Endothelial cell of umbilical vein (primary cell): ENCODE measurements at regions of chr19 and their contacts with region 1.

Region 1: DNA sequence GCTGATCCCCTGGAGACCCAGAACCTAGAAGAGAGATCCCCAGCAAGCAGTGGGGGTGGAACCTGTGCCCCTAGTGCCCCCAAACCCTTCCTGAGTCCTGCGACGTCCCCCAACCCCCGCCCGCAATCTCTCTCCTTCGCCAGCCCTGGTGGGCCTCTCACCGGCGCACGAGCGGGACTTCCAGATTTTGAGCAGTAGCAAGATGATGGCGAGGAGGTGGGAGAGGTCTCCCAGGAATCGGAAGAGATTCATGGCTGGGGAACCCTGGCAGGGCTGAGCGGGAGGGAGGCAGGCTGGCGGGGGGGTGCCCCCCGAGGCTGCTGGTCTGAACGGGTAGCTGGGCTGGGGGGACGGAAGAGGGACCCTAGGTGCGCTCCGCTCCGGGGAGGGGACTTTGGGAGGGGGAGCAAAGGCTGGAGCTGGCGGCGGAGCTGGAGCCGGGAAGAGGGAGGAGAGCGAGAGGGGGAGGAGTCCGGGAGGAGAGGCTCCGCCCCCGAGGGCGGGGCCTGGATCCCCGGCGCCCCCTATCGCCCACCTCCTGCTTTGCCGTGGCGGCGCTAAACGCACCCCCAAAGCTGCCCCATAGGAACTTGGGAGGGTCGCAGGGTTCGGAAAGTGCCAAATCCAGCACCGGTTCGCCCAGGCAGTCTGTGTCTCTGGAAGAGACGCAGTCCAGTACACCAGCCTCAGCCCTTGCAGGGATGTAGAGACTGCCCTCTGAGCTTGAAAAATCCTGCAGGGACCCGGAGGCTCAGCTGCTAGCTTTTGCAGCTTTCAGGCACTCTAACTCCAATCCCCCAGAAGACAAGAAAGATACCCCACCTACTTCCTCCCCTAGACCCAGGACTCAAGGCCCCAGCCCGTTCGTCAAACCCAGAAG is at the start of gene KDELR1:
- DNase-seq: peak; percentile 75
- H3K4me3 ChIP-seq: peak within 1 kb of the TSS; percentile 76 to 99 (median 83)
- H3K27ac ChIP-seq: peak within 1 kb of the TSS; percentile 65
- H3K4me1 ChIP-seq: peaks cover 3% of the 10 kb centered on the region
- H3K27me3 ChIP-seq: peaks cover 16 to 33% of the 10 kb centered on the region in 2 experiments
- CTCF ChIP-seq: peak; percentile 94 to 99
- POLR2A ChIP-seq: peak; percentile 77
- total RNA-seq, gene KDELR1: 199 and 200 TPM in 2 replicates

Region 2: GRCh38 chr19:48321622-48322591 is 69.4 kb before region 1 on chr19:
- CTCF ChIA-PET with region 1: interaction called, 15 read pairs
- POLR2A ChIA-PET with region 1: no interaction called
- dilution Hi-C with region 1: no loop called
- intact Hi-C with region 1: loop called (anchors 2 kb)
- DNase-seq: peak; percentile 98
- H3K4me3 ChIP-seq: peak overlapping the region in 2 of 3 experiments; percentile 38 to 40
- H3K27ac ChIP-seq: peak overlapping the region; percentile 97
- H3K4me1 ChIP-seq: peaks cover 27% of the 10 kb centered on the region
- H3K27me3 ChIP-seq: no peaks in the 10 kb centered on the region
- CTCF ChIP-seq: no peak
- POLR2A ChIP-seq: peak; percentile 82

Region 3: GRCh38 chr19:48379058-48379457 is 12.3 kb before region 1 on chr19:
- CTCF ChIA-PET with region 1: interaction called, 12 read pairs
- POLR2A ChIA-PET with region 1: no interaction called
- dilution Hi-C with region 1: no loop called
- intact Hi-C with region 1: no loop called
- DNase-seq: no peak
- H3K4me3 ChIP-seq: no peak overlapping the region
- H3K27ac ChIP-seq: no peak overlapping the region
- H3K4me1 ChIP-seq: no peaks in the 10 kb centered on the region
- H3K27me3 ChIP-seq: no peaks in the 10 kb centered on the region
- CTCF ChIP-seq: no peak
- POLR2A ChIP-seq: no peak

Region 4: DNA sequence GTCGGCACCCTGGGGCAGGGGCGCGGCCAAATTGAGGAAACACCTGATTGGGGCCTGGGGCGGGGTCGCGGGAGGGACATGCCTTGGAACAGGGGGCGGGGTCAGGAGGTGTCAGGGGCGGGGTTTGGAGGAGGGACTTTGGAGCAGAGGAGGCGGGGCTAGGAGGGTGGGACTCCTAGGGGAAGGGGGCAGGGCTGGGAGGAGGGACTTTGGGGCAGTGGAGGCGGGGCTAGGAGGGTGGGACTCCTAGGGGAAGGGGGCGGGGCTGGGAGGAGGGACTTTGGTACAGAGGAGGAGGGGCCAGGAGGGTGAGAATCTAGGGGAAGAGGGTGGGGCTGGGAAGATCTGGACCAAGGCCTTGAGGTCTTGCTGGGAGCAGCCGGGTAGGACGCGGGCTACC is 24.0 kb after region 1 on chr19:
- CTCF ChIA-PET with region 1: interaction called, 11 read pairs
- POLR2A ChIA-PET with region 1: no interaction called
- dilution Hi-C with region 1: no loop called
- intact Hi-C with region 1: no loop called
- DNase-seq: peak; percentile 85
- H3K4me3 ChIP-seq: peak overlapping the region in 2 of 3 experiments; percentile 31 to 37
- H3K27ac ChIP-seq: no peak overlapping the region
- H3K4me1 ChIP-seq: peaks cover 6% of the 10 kb centered on the region
- H3K27me3 ChIP-seq: no peaks in the 10 kb centered on the region
- CTCF ChIP-seq: no peak
- POLR2A ChIP-seq: no peak